Vagina (tissue), 2 donors: ENCODE measurements at regions of chr5 and their contacts with region 1.

Region 1: GRCh38 chr5:50962934-50963872 is 296.8 kb downstream of the PARP8 start:
- DNase-seq: peak in 1 of 2 donors; percentile 94
- H3K4me3 ChIP-seq: peak overlapping the region; percentile 57 to 60
- H3K27ac ChIP-seq: peak overlapping the region; percentile 98
- H3K4me1 ChIP-seq: peaks cover 33% of the 10 kb centered on the region
- H3K27me3 ChIP-seq: no peaks in the 10 kb centered on the region
- CTCF ChIP-seq: peak; percentile 87 to 96 (median 91)
- POLR2A ChIP-seq: no peak

Region 2: DNA sequence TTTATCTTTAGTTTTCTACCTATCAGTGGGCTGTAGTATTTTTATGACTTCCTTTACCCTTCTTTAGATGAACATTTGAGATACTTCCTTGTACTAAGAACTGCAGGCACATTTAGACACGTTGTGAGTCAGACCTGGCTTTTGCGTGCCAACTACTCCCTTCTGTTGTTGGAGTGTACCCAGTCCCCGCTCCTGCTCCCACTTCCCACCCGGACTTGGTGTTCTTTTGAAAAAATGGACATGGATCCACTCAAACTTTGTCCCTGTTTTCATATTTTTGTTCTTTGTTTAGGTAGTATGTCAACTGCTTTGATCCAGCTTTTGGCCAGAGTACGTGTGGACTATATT is 236.1 kb before region 1 on chr5:
- intact Hi-C with region 1: no loop called
- DNase-seq: no peak
- H3K4me3 ChIP-seq: no peak overlapping the region
- H3K27ac ChIP-seq: no peak overlapping the region
- H3K4me1 ChIP-seq: peaks cover 25% of the 10 kb centered on the region
- H3K27me3 ChIP-seq: no peaks in the 10 kb centered on the region
- CTCF ChIP-seq: no peak
- POLR2A ChIP-seq: no peak

Region 3: GRCh38 chr5:50824109-50824508 is 139.1 kb before region 1 on chr5:
- intact Hi-C with region 1: no loop called
- DNase-seq: no peak
- H3K4me3 ChIP-seq: no peak overlapping the region
- H3K27ac ChIP-seq: no peak overlapping the region
- H3K4me1 ChIP-seq: no peaks in the 10 kb centered on the region
- H3K27me3 ChIP-seq: no peaks in the 10 kb centered on the region
- CTCF ChIP-seq: no peak
- POLR2A ChIP-seq: no peak

Region 4: GRCh38 chr5:51172903-51173626 is 209.9 kb after region 1 on chr5:
- intact Hi-C with region 1: loop called (anchors 10 kb)
- DNase-seq: no peak
- H3K4me3 ChIP-seq: no peak overlapping the region
- H3K27ac ChIP-seq: no peak overlapping the region
- H3K4me1 ChIP-seq: no peaks in the 10 kb centered on the region
- H3K27me3 ChIP-seq: no peaks in the 10 kb centered on the region
- CTCF ChIP-seq: no peak
- POLR2A ChIP-seq: no peak

Region 5: GRCh38 chr5:51382763-51383490 is 419.7 kb after region 1 on chr5 and contains the start of gene ISL1:
- intact Hi-C with region 1: loop called (anchors 2 kb)
- DNase-seq: no peak
- H3K4me3 ChIP-seq: peak within 1 kb of the TSS; percentile 70 to 78
- H3K27ac ChIP-seq: peak within 1 kb of the TSS; percentile 99
- H3K4me1 ChIP-seq: no peaks in the 10 kb centered on the region
- H3K27me3 ChIP-seq: no peaks in the 10 kb centered on the region
- CTCF ChIP-seq: no peak
- POLR2A ChIP-seq: peak in 1 of 2 donors; percentile 99
- total RNA-seq, gene ISL1: 25.0 TPM

Region 6: DNA sequence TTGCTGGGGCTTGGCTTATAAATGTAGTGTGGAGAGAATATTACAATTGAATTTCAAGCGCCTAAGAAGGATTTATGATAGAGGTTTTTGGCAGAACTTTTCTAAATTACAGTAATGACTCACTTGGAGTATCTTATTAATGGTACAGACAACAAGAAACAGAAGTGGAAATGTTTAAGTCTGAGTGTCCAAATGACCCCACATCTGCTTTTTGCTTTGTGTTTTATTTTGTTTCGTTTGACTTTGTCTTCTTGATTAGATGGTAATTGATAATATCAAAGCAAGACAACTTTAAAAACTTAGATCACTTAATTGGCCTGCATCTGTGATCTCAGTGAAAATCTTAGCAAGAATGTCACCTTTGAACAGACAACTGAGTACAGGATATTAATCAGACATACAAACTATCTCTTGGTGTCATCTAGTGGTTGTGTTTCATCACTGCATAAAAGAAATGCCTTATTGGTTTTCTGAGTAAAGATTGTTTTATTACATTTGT is 997.5 kb after region 1 on chr5:
- intact Hi-C with region 1: loop called (anchors 10 kb)
- DNase-seq: no peak
- H3K4me3 ChIP-seq: no peak overlapping the region
- H3K27ac ChIP-seq: no peak overlapping the region
- H3K4me1 ChIP-seq: no peaks in the 10 kb centered on the region
- H3K27me3 ChIP-seq: no peaks in the 10 kb centered on the region
- CTCF ChIP-seq: peak in 2 of 3 experiments; percentile 48 to 59
- POLR2A ChIP-seq: no peak